ENCODE measurements at regions of chr12 and their contacts with region 1.

Region 1: GRCh38 chr12:64445490-64445889 is 6.4 kb upstream of the TBK1 start:
- DNase-seq: no peak
- ATAC-seq: no peak
- H3K4me3 ChIP-seq: no peak overlapping the region
- H3K27ac ChIP-seq: no peak overlapping the region
- H3K4me1 ChIP-seq: peaks cover 0 to under 1% (median 0%) of the 10 kb centered on the region in 12 donors
- H3K27me3 ChIP-seq: no peaks in the 10 kb centered on the region
- CTCF ChIP-seq: no peak
- POLR2A ChIP-seq: no peak

Region 2: GRCh38 chr12:64412459-64412858 is 33.0 kb before region 1 on chr12:
- intact Hi-C with region 1: loop called in 2 of 10 experiments (anchors 5 to 10 kb)
- DNase-seq: no peak
- ATAC-seq: no peak
- H3K4me3 ChIP-seq: no peak overlapping the region
- H3K27ac ChIP-seq: no peak overlapping the region
- H3K4me1 ChIP-seq: no peaks in the 10 kb centered on the region
- H3K27me3 ChIP-seq: no peaks in the 10 kb centered on the region
- CTCF ChIP-seq: no peak
- POLR2A ChIP-seq: no peak

Measured in heart left ventricle (tissue), 16 donors.